ENCODE measurements at regions of chr5 and their contacts with region 1.

Region 1: GRCh38 chr5:173764321-173765029 is 123.7 kb upstream of the CPEB4 start:
- DNase-seq: peak; percentile 88
- ATAC-seq: peak; percentile 83
- H3K4me3 ChIP-seq: peak overlapping the region; percentile 8 to 44 (median 14); a peak in 3 of 6 replicates
- H3K27ac ChIP-seq: peak overlapping the region; percentile 89
- H3K4me1 ChIP-seq: peaks cover 100% of the 10 kb centered on the region
- H3K27me3 ChIP-seq: no peaks in the 10 kb centered on the region
- CTCF ChIP-seq: 0 out of 2 replicates have a peak, but pooled peaks have one; percentile 22
- EP300 ChIP-seq: peak in 1 of 2 experiments; percentile 70; a peak in 2 of 4 replicates
- POLR2A ChIP-seq: peak; percentile 45 to 68; a peak in 3 of 4 replicates
- RAD21 ChIP-seq: 0 out of 2 replicates have a peak, but pooled peaks have one; percentile 11

Region 2: DNA sequence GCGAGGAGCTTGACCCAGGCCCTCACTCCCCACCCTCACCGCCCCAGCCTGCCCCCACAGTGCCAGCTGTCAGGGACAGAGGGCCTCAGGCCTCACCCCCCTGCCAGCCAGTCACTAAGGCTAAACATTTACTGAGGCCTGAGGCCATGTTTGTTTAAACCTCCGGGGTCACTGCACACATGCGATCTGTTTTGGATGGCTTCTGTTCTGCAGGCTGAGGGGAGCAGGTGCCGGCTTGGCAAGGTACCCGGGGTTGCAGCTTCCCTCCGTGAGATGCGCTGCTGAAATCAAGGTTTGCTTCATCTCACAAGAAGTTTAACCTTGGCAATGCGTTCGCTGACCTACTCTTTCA is 44.8 kb before region 1 on chr5:
- CTCF ChIA-PET with region 1: no interaction called
- POLR2A ChIA-PET with region 1: no interaction called
- in situ Hi-C with region 1: no loop called
- intact Hi-C with region 1: loop called (anchors 1 kb)
- DNase-seq: peak; percentile 77
- ATAC-seq: peak; percentile 97
- H3K4me3 ChIP-seq: peak overlapping the region in 2 of 3 experiments; percentile 21 to 40; a peak in 3 of 6 replicates
- H3K27ac ChIP-seq: peak overlapping the region; percentile 13
- H3K4me1 ChIP-seq: peaks cover 56% of the 10 kb centered on the region
- H3K27me3 ChIP-seq: no peaks in the 10 kb centered on the region
- CTCF ChIP-seq: no peak
- EP300 ChIP-seq: peak in 1 of 2 experiments; percentile 71; a peak in 2 of 4 replicates
- POLR2A ChIP-seq: no peak
- RAD21 ChIP-seq: no peak

Region 3: GRCh38 chr5:173753307-173754168 is 10.9 kb before region 1 on chr5:
- CTCF ChIA-PET with region 1: no interaction called
- POLR2A ChIA-PET with region 1: interaction called, 19 read pairs
- in situ Hi-C with region 1: no loop called
- intact Hi-C with region 1: no loop called
- DNase-seq: peak; percentile 82
- ATAC-seq: peak; percentile 100
- H3K4me3 ChIP-seq: no peak overlapping the region
- H3K27ac ChIP-seq: peak overlapping the region; percentile 23
- H3K4me1 ChIP-seq: peaks cover 37% of the 10 kb centered on the region
- H3K27me3 ChIP-seq: no peaks in the 10 kb centered on the region
- CTCF ChIP-seq: no peak; the same call in 1 of the 2 replicates
- EP300 ChIP-seq: 0 out of 4 replicates have a peak, but pooled peaks of 1 of the 2 experiments have one; percentile 28
- POLR2A ChIP-seq: no peak
- RAD21 ChIP-seq: no peak

Region 4: GRCh38 chr5:173802670-173803165 is 38.2 kb after region 1 on chr5:
- CTCF ChIA-PET with region 1: no interaction called
- POLR2A ChIA-PET with region 1: interaction called, 11 read pairs
- in situ Hi-C with region 1: no loop called
- intact Hi-C with region 1: no loop called
- DNase-seq: peak; percentile 95
- ATAC-seq: peak; percentile 84
- H3K4me3 ChIP-seq: peak overlapping the region in 1 of 3 experiments; percentile 36; a peak in 1 of 6 replicates
- H3K27ac ChIP-seq: peak overlapping the region; percentile 58
- H3K4me1 ChIP-seq: peaks cover 87% of the 10 kb centered on the region
- H3K27me3 ChIP-seq: no peaks in the 10 kb centered on the region
- CTCF ChIP-seq: 0 out of 2 replicates have a peak, but pooled peaks have one; percentile 12
- EP300 ChIP-seq: peak; percentile 92 to 96
- POLR2A ChIP-seq: peak in 1 of 2 experiments; percentile 32; a peak in 1 of 4 replicates
- RAD21 ChIP-seq: peak; percentile 37; the same call in 1 of the 2 replicates

Region 5: GRCh38 chr5:173887610-173888472 is 123.4 kb after region 1 on chr5 and contains the start of gene CPEB4:
- CTCF ChIA-PET with region 1: no interaction called
- POLR2A ChIA-PET with region 1: interaction called, 12 read pairs
- in situ Hi-C with region 1: no loop called
- intact Hi-C with region 1: loop called (anchors 2 kb)
- DNase-seq: peak; percentile 99
- ATAC-seq: peak; percentile 98
- H3K4me3 ChIP-seq: peak within 1 kb of the TSS; percentile 79 to 90 (median 81)
- H3K27ac ChIP-seq: peak within 1 kb of the TSS; percentile 92
- H3K4me1 ChIP-seq: peaks cover 48% of the 10 kb centered on the region
- H3K27me3 ChIP-seq: no peaks in the 10 kb centered on the region
- CTCF ChIP-seq: no peak
- EP300 ChIP-seq: no peak
- POLR2A ChIP-seq: peak; percentile 83 to 84
- RAD21 ChIP-seq: no peak
- total RNA-seq, gene CPEB4: 7.7 and 8.3 TPM in 2 replicates

Measured in HepG2 (cell line).